Caco-2 (cell line): ENCODE measurements at regions of chr11 and their contacts with region 1.

Region 1: GRCh38 chr11:67006139-67006884 is 16.6 kb upstream of the SYT12 start:
- DNase-seq: peak; percentile 74 to 83
- H3K4me3 ChIP-seq: no peak overlapping the region
- H3K4me3 Mint-ChIP-seq: no peak overlapping the region
- H3K27ac Mint-ChIP-seq: no peak overlapping the region
- H3K4me1 ChIP-seq: peaks cover 16% of the 10 kb centered on the region; the same call in 1 of the 2 replicates
- H3K4me1 Mint-ChIP-seq: peaks cover 15% of the 10 kb centered on the region
- H3K27me3 ChIP-seq: no peaks in the 10 kb centered on the region
- H3K27me3 Mint-ChIP-seq: no peaks in the 10 kb centered on the region
- CTCF ChIP-seq: no peak

Region 2: DNA sequence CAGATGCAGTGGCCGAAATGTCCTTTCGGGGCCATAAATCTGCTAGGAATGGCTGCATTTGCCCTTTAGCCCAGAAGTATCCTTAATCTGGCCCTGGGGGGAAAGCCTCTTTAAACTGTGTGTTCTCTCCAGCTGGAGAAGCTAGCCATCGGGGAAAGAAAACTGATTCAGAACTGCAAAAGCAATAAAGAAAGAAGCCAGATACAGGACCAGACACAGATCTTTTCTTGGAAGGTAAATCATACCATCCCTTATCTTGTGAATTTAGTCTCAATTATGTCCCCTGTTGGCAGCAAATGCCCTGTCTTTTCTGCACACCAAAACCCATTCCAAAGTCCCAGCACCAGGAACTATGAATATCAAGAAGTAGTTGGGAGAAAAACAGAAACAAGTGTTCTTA is 73.8 kb before region 1 on chr11:
- CTCF ChIA-PET with region 1: interaction called, 12 read pairs
- POLR2A ChIA-PET with region 1: no interaction called
- intact Hi-C with region 1: no loop called
- DNase-seq: no peak
- H3K4me3 ChIP-seq: no peak overlapping the region
- H3K4me3 Mint-ChIP-seq: no peak overlapping the region
- H3K27ac Mint-ChIP-seq: no peak overlapping the region
- H3K4me1 ChIP-seq: peaks cover 21% of the 10 kb centered on the region
- H3K4me1 Mint-ChIP-seq: peaks cover 25% of the 10 kb centered on the region
- H3K27me3 ChIP-seq: no peaks in the 10 kb centered on the region
- H3K27me3 Mint-ChIP-seq: no peaks in the 10 kb centered on the region
- CTCF ChIP-seq: no peak

Region 3: GRCh38 chr11:66967670-66968425 is 38.5 kb before region 1 on chr11:
- CTCF ChIA-PET with region 1: no interaction called
- POLR2A ChIA-PET with region 1: no interaction called
- intact Hi-C with region 1: no loop called
- DNase-seq: no peak
- H3K4me3 ChIP-seq: no peak overlapping the region
- H3K4me3 Mint-ChIP-seq: no peak overlapping the region
- H3K27ac Mint-ChIP-seq: peak overlapping the region; percentile 2
- H3K4me1 ChIP-seq: peaks cover 31% of the 10 kb centered on the region
- H3K4me1 Mint-ChIP-seq: peaks cover 8% of the 10 kb centered on the region
- H3K27me3 ChIP-seq: no peaks in the 10 kb centered on the region
- H3K27me3 Mint-ChIP-seq: no peaks in the 10 kb centered on the region
- CTCF ChIP-seq: no peak

Region 4: DNA sequence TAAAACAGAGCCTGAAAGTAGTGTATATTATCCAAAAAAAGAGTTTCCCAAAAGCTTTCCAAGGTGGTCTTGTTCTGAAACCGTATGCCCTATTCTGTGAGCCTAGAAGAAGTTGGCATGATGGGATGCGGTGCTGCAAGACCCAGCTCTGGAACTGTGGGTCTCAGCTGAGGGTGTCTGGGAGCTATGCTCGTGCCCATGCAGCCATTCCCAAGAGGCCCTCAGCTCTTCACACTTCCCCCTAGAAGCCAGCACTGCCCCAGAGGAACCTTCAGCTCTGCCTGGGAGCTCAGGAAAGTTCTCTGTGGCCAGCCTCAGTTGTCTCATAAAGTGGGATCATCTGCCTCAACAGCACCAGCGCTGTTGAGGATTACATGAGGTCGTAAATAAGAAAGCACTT is 10.2 kb after region 1 on chr11:
- CTCF ChIA-PET with region 1: interaction called, 9 read pairs
- POLR2A ChIA-PET with region 1: interaction called, 10 read pairs
- intact Hi-C with region 1: no loop called
- DNase-seq: no peak
- H3K4me3 ChIP-seq: no peak overlapping the region
- H3K4me3 Mint-ChIP-seq: no peak overlapping the region
- H3K27ac Mint-ChIP-seq: no peak overlapping the region
- H3K4me1 ChIP-seq: no peaks in the 10 kb centered on the region
- H3K4me1 Mint-ChIP-seq: no peaks in the 10 kb centered on the region
- H3K27me3 ChIP-seq: no peaks in the 10 kb centered on the region
- H3K27me3 Mint-ChIP-seq: no peaks in the 10 kb centered on the region
- CTCF ChIP-seq: no peak